ENCODE measurements at regions of chr7 and their contacts with region 1.

Region 1: DNA sequence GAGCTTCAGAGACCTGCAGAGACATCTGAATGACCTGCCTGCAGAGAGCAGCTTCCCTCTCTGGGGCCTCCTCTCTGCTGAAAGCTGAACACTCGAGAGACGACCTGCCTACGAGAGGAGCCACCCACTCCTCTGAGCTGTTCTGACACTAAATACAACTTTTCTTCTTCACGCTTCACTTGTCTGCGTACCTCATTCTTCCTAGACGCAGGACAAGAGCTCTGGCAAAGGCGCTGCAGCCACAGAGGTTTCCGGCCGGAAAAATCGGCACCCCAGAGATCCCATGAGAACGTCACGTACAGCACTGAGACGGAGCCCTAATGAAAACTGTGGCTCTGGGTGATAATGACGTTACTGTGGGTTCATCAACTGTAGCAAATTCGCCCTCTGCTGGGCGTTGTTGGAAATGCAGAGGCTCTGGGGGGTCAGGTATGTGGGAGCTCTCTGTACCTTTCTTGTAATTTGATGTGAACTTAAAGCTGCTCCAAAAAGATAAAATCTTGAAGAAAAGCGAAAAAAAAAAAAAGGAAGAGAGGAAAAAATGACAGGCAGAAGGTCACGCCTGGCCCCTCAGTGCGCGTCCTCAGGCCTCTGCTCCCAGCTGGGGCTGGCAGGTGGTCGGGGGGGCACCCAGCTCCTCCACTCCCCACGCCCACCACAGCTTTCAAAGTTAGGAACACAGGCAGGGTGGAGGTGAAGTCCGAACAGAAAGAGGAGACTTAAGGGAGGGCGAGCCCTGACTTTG is 120.7 kb downstream of the DYNC2I1 start:
- DNase-seq: peak; percentile 77
- H3K4me3 ChIP-seq: peak overlapping the region in 2 of 3 experiments; percentile 21 to 28
- H3K27ac ChIP-seq: no peak overlapping the region
- H3K4me1 ChIP-seq: no peaks in the 10 kb centered on the region
- H3K27me3 ChIP-seq: no peaks in the 10 kb centered on the region
- CTCF ChIP-seq: peak; percentile 81 to 91
- POLR2A ChIP-seq: no peak

Region 2: DNA sequence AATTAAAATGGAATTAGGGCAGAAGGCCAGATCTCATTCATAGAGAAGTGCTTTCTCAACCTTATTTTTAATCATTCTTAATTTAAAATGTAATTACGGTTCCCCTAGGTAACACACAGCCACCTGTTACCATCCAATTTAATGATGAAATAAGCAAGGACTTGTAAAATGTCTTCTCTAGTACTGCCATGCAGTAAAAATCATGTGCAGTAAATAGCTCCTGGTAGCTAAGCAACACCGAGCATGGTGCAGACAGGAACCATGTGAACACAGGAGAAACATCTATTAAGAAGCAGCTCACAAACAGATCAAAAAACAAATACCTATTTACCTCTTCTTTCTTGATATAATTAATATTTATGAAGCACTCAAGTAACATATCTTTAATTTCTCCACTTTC is 287.5 kb before region 1 on chr7:
- CTCF ChIA-PET with region 1: interaction called, 291 read pairs
- POLR2A ChIA-PET with region 1: no interaction called
- dilution Hi-C with region 1: no loop called
- intact Hi-C with region 1: no loop called
- DNase-seq: no peak
- H3K4me3 ChIP-seq: no peak overlapping the region
- H3K27ac ChIP-seq: no peak overlapping the region
- H3K4me1 ChIP-seq: no peaks in the 10 kb centered on the region
- H3K27me3 ChIP-seq: no peaks in the 10 kb centered on the region
- CTCF ChIP-seq: no peak
- POLR2A ChIP-seq: no peak

Region 3: GRCh38 chr7:158704704-158705468 is 272.1 kb before region 1 on chr7 and contains the start of gene NCAPG2:
- CTCF ChIA-PET with region 1: interaction called, 291 read pairs
- POLR2A ChIA-PET with region 1: no interaction called
- dilution Hi-C with region 1: no loop called
- intact Hi-C with region 1: loop called (anchors 2 kb)
- DNase-seq: peak; percentile 98
- H3K4me3 ChIP-seq: peak within 1 kb of the TSS; percentile 87 to 100 (median 89)
- H3K27ac ChIP-seq: peak within 1 kb of the TSS; percentile 78
- H3K4me1 ChIP-seq: peaks cover 24% of the 10 kb centered on the region
- H3K27me3 ChIP-seq: no peaks in the 10 kb centered on the region
- CTCF ChIP-seq: no peak
- POLR2A ChIP-seq: peak; percentile 45
- total RNA-seq, gene NCAPG2: 62.3 and 66.9 TPM in 2 replicates

Region 4: DNA sequence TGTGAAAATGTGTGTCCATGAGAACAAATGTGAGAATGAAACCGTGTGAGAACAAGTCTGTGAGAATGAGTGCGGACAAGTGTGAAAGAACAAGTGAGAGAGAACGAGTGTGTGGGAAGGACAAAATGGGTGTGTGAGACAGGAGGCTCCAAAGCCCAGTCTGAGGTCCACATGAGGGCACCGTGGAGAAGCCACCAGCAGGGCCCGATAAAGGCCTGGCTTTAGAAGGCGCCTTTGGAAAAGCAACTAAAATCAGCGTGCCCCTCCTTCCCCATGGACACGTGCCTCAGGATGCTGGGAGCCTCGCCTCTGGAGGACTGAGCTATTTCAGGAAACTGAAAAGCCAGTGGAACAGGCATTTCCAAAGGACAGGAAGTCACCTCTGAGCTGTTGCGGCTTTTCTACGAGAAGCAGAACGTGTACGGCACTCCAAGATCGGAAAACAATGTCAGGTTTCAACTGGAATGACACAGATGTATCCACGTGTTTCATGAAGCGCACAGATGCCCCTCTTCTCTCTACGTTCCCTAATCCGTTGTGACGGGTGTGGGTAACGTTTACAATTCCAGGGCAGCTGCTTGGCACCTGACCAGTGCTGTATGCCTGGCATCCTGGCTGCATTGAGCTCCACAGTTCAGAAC is 194.1 kb before region 1 on chr7:
- CTCF ChIA-PET with region 1: interaction called, 34 read pairs
- POLR2A ChIA-PET with region 1: no interaction called
- dilution Hi-C with region 1: no loop called
- intact Hi-C with region 1: loop called (anchors 1 kb)
- DNase-seq: peak; percentile 80
- H3K4me3 ChIP-seq: no peak overlapping the region
- H3K27ac ChIP-seq: peak overlapping the region; percentile 4
- H3K4me1 ChIP-seq: peaks cover 12% of the 10 kb centered on the region
- H3K27me3 ChIP-seq: no peaks in the 10 kb centered on the region
- CTCF ChIP-seq: peak; percentile 48 to 53
- POLR2A ChIP-seq: no peak

Region 5: DNA sequence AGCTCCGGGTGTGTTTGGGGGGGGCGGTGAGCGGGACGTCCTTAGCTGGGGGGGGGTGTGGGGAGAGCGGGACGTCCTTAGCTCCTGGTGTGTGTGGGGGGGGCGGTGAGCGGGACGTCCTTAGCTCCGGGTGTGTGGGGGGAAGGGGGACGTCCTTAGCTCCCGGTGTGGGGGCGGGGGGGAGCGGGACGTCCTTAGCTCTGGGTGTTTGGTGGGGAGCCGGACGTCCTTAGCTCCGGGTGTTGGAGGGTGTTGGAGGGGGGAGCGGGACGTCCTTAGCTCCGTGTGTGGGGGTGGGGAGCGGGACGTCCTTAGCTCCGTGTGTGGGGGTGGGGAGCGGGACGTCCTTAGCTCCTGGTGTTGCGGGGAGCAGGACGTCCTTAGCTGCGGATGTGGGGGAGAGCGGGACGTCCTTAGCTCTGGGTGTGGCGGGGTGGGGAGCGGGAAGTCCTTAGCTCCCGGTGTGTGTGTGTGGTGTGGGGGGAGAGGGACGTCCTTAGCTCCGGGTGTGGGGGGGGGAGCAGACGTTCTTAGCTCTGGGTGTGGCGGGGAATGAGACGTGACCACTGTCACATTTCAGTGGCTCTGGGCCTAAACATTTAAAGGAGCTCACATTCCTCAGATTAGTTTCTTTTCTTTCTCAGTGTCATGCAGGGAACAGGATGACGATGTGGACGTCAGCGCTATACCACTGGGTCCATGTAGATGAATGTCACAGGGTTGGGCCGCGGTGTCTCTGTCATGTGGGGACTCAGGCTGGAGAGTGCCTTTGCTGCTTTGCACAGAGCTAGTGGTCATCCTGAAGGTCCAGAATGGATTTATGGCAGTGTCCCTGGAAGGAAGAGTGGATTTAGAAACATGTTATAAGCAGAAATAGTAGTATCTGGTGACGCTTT is 113.2 kb before region 1 on chr7:
- CTCF ChIA-PET with region 1: interaction called, 10 read pairs
- POLR2A ChIA-PET with region 1: no interaction called
- dilution Hi-C with region 1: no loop called
- intact Hi-C with region 1: no loop called
- DNase-seq: peak; percentile 41
- H3K4me3 ChIP-seq: peak overlapping the region; percentile 4 to 54 (median 33)
- H3K27ac ChIP-seq: no peak overlapping the region
- H3K4me1 ChIP-seq: peaks cover 4% of the 10 kb centered on the region
- H3K27me3 ChIP-seq: no peaks in the 10 kb centered on the region
- CTCF ChIP-seq: no peak
- POLR2A ChIP-seq: no peak

Region 6: DNA sequence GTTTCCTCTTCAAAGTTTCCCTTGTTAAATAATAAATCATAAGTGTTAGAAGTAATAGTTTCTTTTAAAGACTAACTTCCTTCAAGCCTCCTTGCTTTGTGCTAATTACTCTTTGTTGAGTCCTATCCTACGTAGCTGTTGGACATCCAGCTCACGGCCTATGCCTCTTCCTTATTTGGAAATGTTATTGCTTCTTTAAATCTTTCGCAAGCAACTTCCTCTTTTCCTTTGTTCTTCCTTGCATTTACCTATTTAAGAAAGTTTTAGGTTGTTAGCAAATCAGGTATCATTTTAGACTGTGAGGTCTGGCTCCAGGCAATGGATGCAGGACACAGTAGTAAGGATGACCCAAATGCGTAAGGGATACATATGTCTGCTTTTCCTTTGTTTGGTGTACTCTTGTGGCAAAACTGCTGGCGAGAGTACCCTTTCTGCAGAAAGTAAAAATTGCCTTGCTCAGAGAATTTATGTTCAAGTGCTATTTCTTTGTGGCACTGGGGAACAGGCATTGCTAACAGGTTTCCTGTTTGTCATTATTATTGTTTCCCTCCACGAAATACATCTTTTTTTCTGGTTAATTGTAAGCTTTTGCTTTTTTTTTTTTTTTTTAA is 10.1 kb before region 1 on chr7:
- CTCF ChIA-PET with region 1: interaction called, 13 read pairs
- POLR2A ChIA-PET with region 1: no interaction called
- dilution Hi-C with region 1: no loop called
- intact Hi-C with region 1: no loop called
- DNase-seq: no peak
- H3K4me3 ChIP-seq: no peak overlapping the region
- H3K27ac ChIP-seq: no peak overlapping the region
- H3K4me1 ChIP-seq: no peaks in the 10 kb centered on the region
- H3K27me3 ChIP-seq: no peaks in the 10 kb centered on the region
- CTCF ChIP-seq: no peak
- POLR2A ChIP-seq: no peak